ENCODE measurements at regions of chr11 and their contacts with region 1.

Region 1: GRCh38 chr11:62108017-62108750 is 15.6 kb upstream of the INCENP start:
- DNase-seq: peak; percentile 49
- ATAC-seq: peak; percentile 37
- H3K4me3 Mint-ChIP-seq: no peak overlapping the region
- H3K27ac Mint-ChIP-seq: no peak overlapping the region
- H3K4me1 Mint-ChIP-seq: peaks cover 16% of the 10 kb centered on the region
- H3K27me3 Mint-ChIP-seq: no peaks in the 10 kb centered on the region
- CTCF ChIP-seq: peak; percentile 78

Region 2: DNA sequence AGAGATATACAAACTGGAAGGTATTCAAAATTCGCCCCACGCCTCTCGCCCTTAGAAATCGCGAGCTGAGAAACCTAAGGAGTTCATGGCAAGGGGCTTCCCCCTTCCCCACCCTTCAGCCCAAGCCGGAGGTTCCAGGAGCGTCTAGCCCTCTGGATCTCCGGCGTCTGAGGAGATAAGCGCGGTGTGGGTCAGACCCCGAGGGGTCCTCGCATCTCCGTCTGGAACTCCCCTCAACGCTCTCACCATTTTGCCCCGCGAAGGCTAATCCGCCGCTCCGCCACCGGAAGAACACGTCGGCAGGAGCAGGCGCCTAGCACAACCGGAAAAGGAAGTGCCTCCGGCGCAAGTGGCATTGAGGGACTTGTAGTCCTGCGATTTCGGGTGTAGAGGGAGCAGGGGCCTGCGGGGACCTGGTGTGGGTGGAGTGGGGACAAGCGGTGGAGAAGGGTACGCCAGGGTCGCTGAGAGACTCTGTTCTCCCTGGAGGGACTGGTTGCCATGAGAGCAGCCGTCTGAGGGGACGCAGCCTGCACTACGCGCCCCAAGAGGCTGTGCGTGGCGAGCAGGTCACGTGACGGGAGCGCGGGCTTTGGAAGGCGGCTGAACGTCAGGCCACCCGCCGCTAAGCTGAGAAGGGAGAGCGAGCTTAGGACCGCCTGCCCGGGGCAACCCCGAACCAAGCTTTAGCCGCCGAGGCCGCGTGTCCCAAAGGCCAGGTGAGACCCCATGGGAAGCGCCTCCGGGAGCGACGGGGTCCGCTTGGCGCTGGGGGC is 315.7 kb before region 1 on chr11 and contains the starts of genes FEN1 and TMEM258:
- CTCF ChIA-PET with region 1: interaction called, 21 read pairs
- POLR2A ChIA-PET with region 1: no interaction called
- intact Hi-C with region 1: no loop called
- DNase-seq: peak; percentile 94
- ATAC-seq: peak; percentile 87
- H3K4me3 Mint-ChIP-seq: peak within 1 kb of the TSS; percentile 89
- H3K27ac Mint-ChIP-seq: peak within 1 kb of the TSS; percentile 100
- H3K4me1 Mint-ChIP-seq: peaks cover 57% of the 10 kb centered on the region
- H3K27me3 Mint-ChIP-seq: no peaks in the 10 kb centered on the region
- CTCF ChIP-seq: no peak
- total RNA-seq, gene FEN1: 109 to 114 TPM
- total RNA-seq, gene TMEM258: 162 to 170 TPM

Region 3: DNA sequence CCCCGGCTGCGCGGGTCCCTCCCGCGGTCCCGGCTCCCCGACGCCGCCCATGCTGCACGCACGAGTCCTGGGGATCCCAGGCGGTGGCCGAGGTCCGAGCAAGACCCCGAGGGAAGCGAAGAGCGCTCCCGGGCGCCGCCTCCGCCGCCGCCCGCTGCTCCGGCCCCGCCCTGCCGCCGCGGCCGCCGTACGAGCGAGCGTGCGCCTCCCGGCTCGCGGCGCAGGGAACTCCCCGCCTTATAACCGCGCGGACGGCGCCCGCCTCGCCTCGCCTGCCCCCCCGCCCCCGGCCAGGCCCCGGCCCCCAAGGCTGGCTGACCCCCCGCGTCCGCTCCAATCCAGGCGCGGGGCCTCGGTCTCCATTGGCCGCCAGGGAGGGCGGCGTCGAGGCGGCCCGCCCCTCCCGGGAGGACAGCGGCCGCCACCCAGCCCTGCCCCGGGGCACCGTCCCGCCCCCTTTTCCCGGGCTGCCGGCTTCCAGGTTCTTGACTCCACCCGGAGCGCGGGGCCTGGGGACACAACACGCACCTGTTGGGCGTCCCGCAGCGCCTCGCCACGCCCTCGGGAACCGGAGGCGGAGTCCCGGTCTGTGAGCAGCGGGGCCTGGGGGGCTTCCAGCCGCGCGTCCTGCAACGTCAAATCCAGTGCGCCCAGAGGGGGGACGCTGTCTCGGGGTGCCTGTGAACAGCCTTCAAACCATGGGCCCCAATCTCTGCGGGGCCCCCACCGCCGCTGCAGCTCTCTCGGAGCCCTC is 216.7 kb before region 1 on chr11 and contains the start of gene FADS3:
- CTCF ChIA-PET with region 1: interaction called, 162 read pairs
- POLR2A ChIA-PET with region 1: interaction called, 3 read pairs
- intact Hi-C with region 1: loop called (anchors 5 kb)
- DNase-seq: peak; percentile 68
- ATAC-seq: peak; percentile 65
- H3K4me3 Mint-ChIP-seq: peak within 1 kb of the TSS; percentile 77
- H3K27ac Mint-ChIP-seq: no peak within 1 kb of the TSS
- H3K4me1 Mint-ChIP-seq: peaks cover 2% of the 10 kb centered on the region
- H3K27me3 Mint-ChIP-seq: no peaks in the 10 kb centered on the region
- CTCF ChIP-seq: no peak
- total RNA-seq, gene FADS3: 10.3 to 13.9 TPM

Region 4: GRCh38 chr11:61904539-61905048 is 203.6 kb before region 1 on chr11:
- CTCF ChIA-PET with region 1: interaction called, 162 read pairs
- POLR2A ChIA-PET with region 1: no interaction called
- intact Hi-C with region 1: loop called (anchors 5 kb)
- DNase-seq: peak; percentile 31
- ATAC-seq: peak; percentile 78
- H3K4me3 Mint-ChIP-seq: no peak overlapping the region
- H3K27ac Mint-ChIP-seq: no peak overlapping the region
- H3K4me1 Mint-ChIP-seq: no peaks in the 10 kb centered on the region
- H3K27me3 Mint-ChIP-seq: no peaks in the 10 kb centered on the region
- CTCF ChIP-seq: no peak

Region 5: GRCh38 chr11:61967116-61967923 is 140.9 kb before region 1 on chr11 and contains the start of gene FTH1:
- CTCF ChIA-PET with region 1: interaction called, 22 read pairs
- POLR2A ChIA-PET with region 1: no interaction called
- intact Hi-C with region 1: no loop called
- DNase-seq: peak; percentile 89
- ATAC-seq: peak; percentile 81
- H3K4me3 Mint-ChIP-seq: peak within 1 kb of the TSS; percentile 86
- H3K27ac Mint-ChIP-seq: peak within 1 kb of the TSS; percentile 94
- H3K4me1 Mint-ChIP-seq: peaks cover 61% of the 10 kb centered on the region
- H3K27me3 Mint-ChIP-seq: no peaks in the 10 kb centered on the region
- CTCF ChIP-seq: no peak
- total RNA-seq, gene FTH1: 700 to 729 TPM

Region 6: DNA sequence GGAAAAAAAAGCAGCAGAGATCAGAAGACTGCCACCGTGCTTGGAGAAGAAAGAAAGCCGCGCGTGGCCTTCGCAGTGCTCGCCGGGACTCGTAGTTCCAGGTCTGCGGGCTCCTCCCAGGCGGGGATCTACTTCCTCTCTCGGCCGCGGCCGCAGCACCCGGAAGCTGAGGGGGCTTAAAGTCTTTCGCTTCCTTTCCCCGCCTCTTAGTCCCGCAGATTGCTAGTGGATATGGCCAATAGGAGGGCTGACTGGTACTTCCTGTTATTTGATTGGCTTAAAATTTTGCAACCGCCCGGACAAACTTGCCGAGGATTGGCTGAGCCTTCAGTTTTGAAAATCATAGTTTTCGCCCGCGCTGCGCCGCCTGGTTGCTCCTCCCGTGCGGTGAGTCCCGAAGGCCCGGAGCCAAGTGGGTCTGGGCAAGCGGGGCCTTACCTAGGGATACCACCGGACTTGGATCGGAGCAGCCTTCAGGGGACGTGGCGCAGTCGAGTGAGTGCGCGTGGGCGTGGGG is 15.5 kb after region 1 on chr11 and contains the start of gene INCENP:
- CTCF ChIA-PET with region 1: interaction called, 37 read pairs
- POLR2A ChIA-PET with region 1: interaction called, 5 read pairs
- intact Hi-C with region 1: no loop called
- DNase-seq: peak; percentile 98
- ATAC-seq: peak; percentile 99
- H3K4me3 Mint-ChIP-seq: peak within 1 kb of the TSS; percentile 88
- H3K27ac Mint-ChIP-seq: peak within 1 kb of the TSS; percentile 91
- H3K4me1 Mint-ChIP-seq: peaks cover 31% of the 10 kb centered on the region
- H3K27me3 Mint-ChIP-seq: no peaks in the 10 kb centered on the region
- CTCF ChIP-seq: no peak
- total RNA-seq, gene INCENP: 126 to 130 TPM

Region 7: GRCh38 chr11:62295504-62295903 is 187.3 kb after region 1 on chr11:
- CTCF ChIA-PET with region 1: no interaction called
- POLR2A ChIA-PET with region 1: no interaction called
- intact Hi-C with region 1: no loop called
- DNase-seq: peak; percentile 37
- ATAC-seq: peak; percentile 53
- H3K4me3 Mint-ChIP-seq: no peak overlapping the region
- H3K27ac Mint-ChIP-seq: no peak overlapping the region
- H3K4me1 Mint-ChIP-seq: no peaks in the 10 kb centered on the region
- H3K27me3 Mint-ChIP-seq: peaks cover 14% of the 10 kb centered on the region
- CTCF ChIP-seq: no peak

Measured in activated CD8-positive, alpha-beta T cell treated with anti-CD3 and anti-CD28 coated beads for 36 hours (primary cell).